PC-9 (cell line): ENCODE measurements at regions of chrX and their contacts with region 1.

Region 1: GRCh38 chrX:116272328-116272727 is 101.8 kb downstream of the AGTR2 start:
- DNase-seq: peak; percentile 61 to 95
- H3K4me3 ChIP-seq: 0 out of 2 replicates have a peak overlapping the region, but pooled peaks have one; percentile 16
- H3K27ac ChIP-seq: peak overlapping the region; percentile 95
- H3K4me1 ChIP-seq: peaks cover 20% of the 10 kb centered on the region
- H3K27me3 ChIP-seq: no peaks in the 10 kb centered on the region
- CTCF ChIP-seq: no peak

Region 2: GRCh38 chrX:116172976-116173375 is 99.4 kb before region 1 on chrX:
- CTCF ChIA-PET with region 1: no interaction called
- POLR2A ChIA-PET with region 1: no interaction called
- intact Hi-C with region 1: no loop called
- DNase-seq: no peak
- H3K4me3 ChIP-seq: no peak overlapping the region
- H3K27ac ChIP-seq: no peak overlapping the region
- H3K4me1 ChIP-seq: no peaks in the 10 kb centered on the region
- H3K27me3 ChIP-seq: no peaks in the 10 kb centered on the region
- CTCF ChIP-seq: no peak

Region 3: DNA sequence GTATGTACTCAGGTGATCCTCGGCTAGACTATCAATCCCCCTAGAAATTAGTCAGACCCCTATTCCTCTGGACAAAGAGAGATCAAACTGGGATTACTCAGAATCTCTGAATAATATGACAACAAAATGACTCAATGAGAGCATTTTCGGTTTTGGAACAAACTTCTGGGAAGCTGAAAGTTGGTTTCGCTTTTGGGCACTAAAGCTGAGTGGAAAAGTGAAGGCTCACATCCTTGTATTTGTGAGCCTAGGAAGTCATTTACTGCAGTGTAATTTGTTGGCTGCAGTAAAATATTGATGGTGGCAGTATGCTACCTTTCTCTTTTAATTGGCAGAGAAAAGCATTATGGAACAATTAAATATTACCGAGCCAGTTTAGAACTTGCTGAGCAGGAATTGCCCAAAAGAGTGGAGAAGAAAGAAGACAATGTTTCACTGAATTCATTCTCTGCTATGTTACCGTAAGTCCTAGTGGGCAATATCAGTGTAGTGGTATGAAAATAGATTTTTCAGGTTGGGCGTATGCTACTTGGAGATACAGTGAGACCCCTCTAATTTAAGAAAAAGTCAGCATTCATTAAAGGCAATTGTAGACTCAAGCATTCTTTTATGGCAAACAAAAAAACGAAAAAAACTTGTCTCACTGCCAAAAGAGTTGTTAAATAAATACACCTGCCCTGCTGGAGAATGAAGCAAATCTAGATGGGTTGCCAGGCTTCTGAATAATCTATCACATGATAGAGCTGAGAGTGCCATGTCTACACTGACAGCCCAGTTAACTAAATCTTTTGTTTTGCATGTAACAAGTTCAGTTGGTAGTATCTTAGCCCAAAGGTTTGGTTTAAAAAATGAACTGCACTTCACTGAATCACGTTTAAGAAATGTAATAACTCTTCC is 32.1 kb before region 1 on chrX:
- CTCF ChIA-PET with region 1: no interaction called
- POLR2A ChIA-PET with region 1: no interaction called
- intact Hi-C with region 1: loop called (anchors 2 kb)
- DNase-seq: peak in 1 of 2 experiments; percentile 76
- H3K4me3 ChIP-seq: peak overlapping the region; percentile 49
- H3K27ac ChIP-seq: peak overlapping the region; percentile 70
- H3K4me1 ChIP-seq: peaks cover 43% of the 10 kb centered on the region
- H3K27me3 ChIP-seq: no peaks in the 10 kb centered on the region
- CTCF ChIP-seq: no peak

Region 4: DNA sequence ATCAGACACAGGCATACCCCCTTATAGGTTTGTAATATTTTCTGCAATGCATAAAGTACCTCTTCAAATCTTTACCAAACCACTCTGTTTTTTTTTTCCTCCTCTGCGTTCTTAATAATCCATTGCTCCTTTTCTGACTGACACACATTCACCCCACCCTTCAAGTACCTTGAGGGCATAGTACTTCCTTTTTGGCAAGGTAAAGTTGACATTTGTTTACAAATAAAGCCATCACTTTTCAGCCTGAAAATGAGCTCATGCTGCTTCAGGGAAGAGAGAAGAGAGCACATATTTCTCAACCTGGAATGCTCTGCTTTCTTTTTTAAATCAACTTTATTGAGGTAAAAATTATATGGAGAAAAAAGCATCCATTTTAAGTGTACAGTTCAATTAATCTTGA is 12.1 kb after region 1 on chrX:
- CTCF ChIA-PET with region 1: no interaction called
- POLR2A ChIA-PET with region 1: interaction called, 17 read pairs
- intact Hi-C with region 1: no loop called
- DNase-seq: peak; percentile 17 to 89
- H3K4me3 ChIP-seq: no peak overlapping the region
- H3K27ac ChIP-seq: peak overlapping the region; percentile 52
- H3K4me1 ChIP-seq: peaks cover 21% of the 10 kb centered on the region
- H3K27me3 ChIP-seq: no peaks in the 10 kb centered on the region
- CTCF ChIP-seq: no peak